ENCODE measurements at regions of chr1 and their contacts with region 1.

Region 1: DNA sequence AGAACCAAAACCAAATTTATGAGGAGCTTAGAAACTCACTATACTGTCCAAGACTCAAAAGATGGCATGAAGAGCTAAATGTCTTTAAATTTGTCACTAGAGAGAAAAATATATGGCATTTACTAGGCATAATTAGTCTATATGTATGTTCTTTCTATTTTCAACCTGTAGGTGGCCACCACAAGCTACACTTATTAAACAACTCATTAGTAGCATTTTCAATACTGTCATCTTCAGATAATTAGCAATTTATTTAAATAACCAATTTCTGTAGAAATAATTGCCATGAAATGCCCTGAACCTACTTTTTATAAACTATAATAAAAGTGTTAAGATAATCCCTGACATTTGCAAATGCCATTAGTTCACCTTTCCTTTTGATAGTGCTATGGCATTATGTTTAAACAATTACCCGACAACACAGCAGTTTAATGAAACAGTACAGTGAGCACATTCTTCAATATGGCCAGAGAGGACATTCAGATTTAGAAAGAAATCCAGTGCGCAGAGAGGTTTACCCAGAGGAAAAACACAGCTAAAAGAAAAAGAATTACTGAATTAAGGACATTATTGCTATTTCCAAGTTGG is 522.5 kb downstream of the PTBP2 start:
- DNase-seq: no peak
- ATAC-seq: peak; percentile 81
- H3K4me3 ChIP-seq: no peak overlapping the region
- H3K27ac ChIP-seq: no peak overlapping the region
- H3K4me1 ChIP-seq: no peaks in the 10 kb centered on the region
- H3K27me3 ChIP-seq: no peaks in the 10 kb centered on the region
- CTCF ChIP-seq: peak in 2 of 3 experiments; percentile 32 to 41; a peak in 2 of 6 replicates
- EP300 ChIP-seq: no peak
- POLR2A ChIP-seq: no peak
- RAD21 ChIP-seq: peak; percentile 60

Region 2: DNA sequence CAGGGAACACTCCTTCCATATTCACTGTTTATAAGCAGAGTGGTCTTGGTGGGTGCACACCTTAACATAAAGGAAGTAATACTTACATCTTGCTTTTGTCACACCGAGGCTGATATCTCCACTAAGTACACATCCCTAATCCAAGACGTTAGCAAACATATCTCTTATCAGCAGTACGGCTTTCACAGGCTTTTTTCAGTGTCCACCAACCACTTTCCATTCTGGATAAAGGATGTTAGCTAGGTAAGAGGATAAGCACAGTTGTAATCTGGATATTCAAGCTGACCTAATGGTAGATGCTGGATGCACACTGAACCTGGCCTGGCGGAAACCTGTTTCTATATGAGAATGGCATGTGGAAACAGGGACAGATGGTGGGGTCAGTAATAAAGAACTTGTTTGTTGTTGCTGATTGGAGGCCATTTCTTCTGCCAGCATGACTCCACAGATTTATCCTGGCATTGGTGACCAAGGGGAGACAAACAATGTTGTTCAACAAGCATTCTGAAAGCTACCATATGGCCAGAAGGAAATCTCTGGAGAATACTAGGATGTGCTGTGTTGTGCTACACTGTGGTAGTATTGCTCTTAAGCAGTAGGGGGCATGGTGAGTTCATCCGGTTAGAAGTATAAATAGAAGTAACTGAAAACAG is 106.1 kb before region 1 on chr1:
- CTCF ChIA-PET with region 1: interaction called, 34 read pairs
- POLR2A ChIA-PET with region 1: no interaction called
- RAD21 ChIA-PET with region 1: interaction called, 19 read pairs
- SMC1A ChIA-PET with region 1: interaction called, 17 read pairs
- in situ Hi-C with region 1: no loop called
- intact Hi-C with region 1: no loop called
- DNase-seq: peak; percentile 20
- ATAC-seq: peak; percentile 99
- H3K4me3 ChIP-seq: 0 out of 2 replicates have a peak overlapping the region, but pooled peaks have one; percentile 1
- H3K27ac ChIP-seq: no peak overlapping the region
- H3K4me1 ChIP-seq: peaks cover 2% of the 10 kb centered on the region; the same call in 1 of the 2 replicates
- H3K27me3 ChIP-seq: no peaks in the 10 kb centered on the region
- CTCF ChIP-seq: peak; percentile 64 to 75 (median 74)
- EP300 ChIP-seq: no peak
- POLR2A ChIP-seq: no peak
- RAD21 ChIP-seq: peak; percentile 80

Region 3: DNA sequence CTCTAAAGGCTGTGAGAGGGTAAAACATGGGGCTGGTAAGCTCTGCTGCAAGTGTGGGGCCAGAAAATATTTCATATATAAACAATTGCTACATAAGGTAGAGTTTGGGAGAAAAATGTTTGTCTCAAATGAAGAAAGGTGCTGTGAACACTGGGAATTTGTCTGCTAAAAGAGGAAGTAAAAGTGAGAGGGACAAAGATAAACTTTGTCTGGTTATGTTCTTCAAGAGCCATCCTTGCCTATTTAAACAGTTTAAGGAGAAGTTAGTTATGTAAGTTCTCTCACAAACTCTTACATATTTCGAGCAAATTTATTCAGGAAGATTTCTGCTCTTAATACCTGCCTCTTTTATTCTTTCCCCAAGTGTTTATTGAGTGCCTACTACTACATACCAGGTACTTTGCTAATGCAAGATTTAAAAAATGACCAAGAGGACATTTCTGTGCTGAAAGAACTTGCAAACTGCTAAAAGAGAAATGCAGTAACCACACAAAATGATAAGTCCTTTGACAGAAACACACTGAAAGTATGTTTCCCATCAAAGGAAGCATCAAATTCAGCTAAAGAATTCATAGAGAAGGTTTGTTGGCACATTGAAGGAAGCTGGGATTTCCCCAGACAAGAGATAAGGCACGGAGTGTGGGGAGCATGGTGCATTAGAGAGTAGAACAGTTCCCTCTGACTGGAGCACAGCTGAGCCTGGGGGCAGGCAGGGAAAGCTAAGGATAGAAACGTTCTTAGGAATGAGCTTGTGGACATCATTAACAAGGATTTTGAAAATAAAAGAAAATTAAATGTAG is 26.6 kb after region 1 on chr1:
- CTCF ChIA-PET with region 1: interaction called, 12 read pairs
- POLR2A ChIA-PET with region 1: no interaction called
- RAD21 ChIA-PET with region 1: interaction called, 6 read pairs
- SMC1A ChIA-PET with region 1: interaction called, 9 read pairs
- in situ Hi-C with region 1: no loop called
- intact Hi-C with region 1: no loop called
- DNase-seq: no peak
- ATAC-seq: peak; percentile 82
- H3K4me3 ChIP-seq: no peak overlapping the region
- H3K27ac ChIP-seq: no peak overlapping the region
- H3K4me1 ChIP-seq: no peaks in the 10 kb centered on the region
- H3K27me3 ChIP-seq: no peaks in the 10 kb centered on the region
- CTCF ChIP-seq: no peak
- EP300 ChIP-seq: no peak
- POLR2A ChIP-seq: no peak
- RAD21 ChIP-seq: no peak

Region 4: GRCh38 chr1:97820470-97821188 is 576.6 kb after region 1 on chr1:
- CTCF ChIA-PET with region 1: interaction called, 12 read pairs
- POLR2A ChIA-PET with region 1: no interaction called
- RAD21 ChIA-PET with region 1: interaction called, 9 read pairs
- SMC1A ChIA-PET with region 1: interaction called, 7 read pairs
- in situ Hi-C with region 1: no loop called
- intact Hi-C with region 1: no loop called
- DNase-seq: no peak
- ATAC-seq: peak; percentile 78
- H3K4me3 ChIP-seq: no peak overlapping the region
- H3K27ac ChIP-seq: no peak overlapping the region
- H3K4me1 ChIP-seq: no peaks in the 10 kb centered on the region
- H3K27me3 ChIP-seq: no peaks in the 10 kb centered on the region
- CTCF ChIP-seq: peak; percentile 11 to 56 (median 36); a peak in 5 of 6 replicates
- EP300 ChIP-seq: no peak
- POLR2A ChIP-seq: no peak
- RAD21 ChIP-seq: peak; percentile 72

Region 5: GRCh38 chr1:98048244-98048643 is 804.2 kb after region 1 on chr1:
- CTCF ChIA-PET with region 1: interaction called, 24 read pairs
- POLR2A ChIA-PET with region 1: no interaction called
- RAD21 ChIA-PET with region 1: interaction called, 4 read pairs
- SMC1A ChIA-PET with region 1: interaction called, 20 read pairs
- in situ Hi-C with region 1: no loop called
- intact Hi-C with region 1: loop called (anchors 1 kb)
- DNase-seq: no peak
- ATAC-seq: peak; percentile 88
- H3K4me3 ChIP-seq: no peak overlapping the region
- H3K27ac ChIP-seq: no peak overlapping the region
- H3K4me1 ChIP-seq: no peaks in the 10 kb centered on the region
- H3K27me3 ChIP-seq: peaks cover 11 to 24% of the 10 kb centered on the region in 2 experiments
- CTCF ChIP-seq: no peak
- EP300 ChIP-seq: no peak
- POLR2A ChIP-seq: no peak
- RAD21 ChIP-seq: no peak